ENCODE measurements at regions of chr3 and their contacts with region 1.

Region 1: DNA sequence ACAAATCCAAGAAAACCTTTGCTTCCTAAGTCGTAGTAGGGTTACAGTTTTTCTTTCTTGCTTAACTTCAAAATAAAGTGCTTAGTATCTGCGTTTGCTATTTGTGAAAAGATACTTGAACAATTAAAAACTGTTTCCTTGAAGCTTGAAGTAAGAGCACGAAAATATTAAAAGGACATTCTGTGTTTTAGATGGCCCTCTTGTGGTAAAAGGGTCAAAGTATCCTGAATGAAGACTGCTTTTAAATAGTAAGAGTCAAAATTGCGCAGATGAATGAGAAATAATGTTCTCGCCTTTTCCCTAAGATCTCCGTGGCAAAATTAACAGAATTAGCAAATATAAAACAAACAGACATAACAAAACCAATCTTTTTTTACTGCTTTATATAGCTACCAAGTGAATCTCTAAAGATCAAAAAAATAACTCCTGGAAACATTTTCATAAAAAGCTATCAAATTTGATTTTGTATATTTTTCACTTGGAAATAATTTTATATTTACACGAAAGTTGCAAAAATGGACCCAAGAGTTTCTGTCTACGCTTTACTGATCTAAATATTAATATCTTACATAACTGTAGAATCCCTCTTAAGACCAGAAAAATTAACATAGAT is 175.4 kb downstream of the MBNL1 start:
- DNase-seq: no peak
- H3K4me3 Mint-ChIP-seq: no peak overlapping the region
- H3K27ac Mint-ChIP-seq: no peak overlapping the region
- H3K4me1 Mint-ChIP-seq: peaks cover 65% of the 10 kb centered on the region
- H3K27me3 Mint-ChIP-seq: no peaks in the 10 kb centered on the region

Region 2: DNA sequence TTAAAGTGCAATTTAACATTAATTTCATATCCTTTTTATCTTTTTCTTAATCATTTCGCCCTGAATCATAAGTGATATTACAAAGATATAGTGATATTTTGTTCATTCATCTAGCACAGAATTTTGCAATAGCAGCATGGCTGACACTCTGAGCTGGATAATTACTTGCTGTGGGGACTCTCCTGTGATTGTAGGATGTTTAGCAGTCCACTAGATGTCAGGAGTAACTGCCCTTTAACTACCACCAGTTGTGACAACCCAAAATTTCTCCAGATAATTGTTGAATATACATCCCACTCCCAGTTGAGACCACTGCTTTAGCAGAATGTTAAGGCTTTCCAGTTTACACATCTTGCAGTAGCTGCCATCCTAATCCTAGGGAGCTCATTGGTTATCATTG is 372.2 kb before region 1 on chr3:
- intact Hi-C with region 1: loop called (anchors 1 kb)
- DNase-seq: no peak
- H3K4me3 Mint-ChIP-seq: no peak overlapping the region
- H3K27ac Mint-ChIP-seq: no peak overlapping the region
- H3K4me1 Mint-ChIP-seq: no peaks in the 10 kb centered on the region
- H3K27me3 Mint-ChIP-seq: peaks cover 2% of the 10 kb centered on the region

Region 3: GRCh38 chr3:152350139-152350538 is 94.0 kb before region 1 on chr3:
- intact Hi-C with region 1: no loop called
- DNase-seq: no peak
- H3K4me3 Mint-ChIP-seq: no peak overlapping the region
- H3K27ac Mint-ChIP-seq: no peak overlapping the region
- H3K4me1 Mint-ChIP-seq: peaks cover 24% of the 10 kb centered on the region
- H3K27me3 Mint-ChIP-seq: no peaks in the 10 kb centered on the region

Region 4: DNA sequence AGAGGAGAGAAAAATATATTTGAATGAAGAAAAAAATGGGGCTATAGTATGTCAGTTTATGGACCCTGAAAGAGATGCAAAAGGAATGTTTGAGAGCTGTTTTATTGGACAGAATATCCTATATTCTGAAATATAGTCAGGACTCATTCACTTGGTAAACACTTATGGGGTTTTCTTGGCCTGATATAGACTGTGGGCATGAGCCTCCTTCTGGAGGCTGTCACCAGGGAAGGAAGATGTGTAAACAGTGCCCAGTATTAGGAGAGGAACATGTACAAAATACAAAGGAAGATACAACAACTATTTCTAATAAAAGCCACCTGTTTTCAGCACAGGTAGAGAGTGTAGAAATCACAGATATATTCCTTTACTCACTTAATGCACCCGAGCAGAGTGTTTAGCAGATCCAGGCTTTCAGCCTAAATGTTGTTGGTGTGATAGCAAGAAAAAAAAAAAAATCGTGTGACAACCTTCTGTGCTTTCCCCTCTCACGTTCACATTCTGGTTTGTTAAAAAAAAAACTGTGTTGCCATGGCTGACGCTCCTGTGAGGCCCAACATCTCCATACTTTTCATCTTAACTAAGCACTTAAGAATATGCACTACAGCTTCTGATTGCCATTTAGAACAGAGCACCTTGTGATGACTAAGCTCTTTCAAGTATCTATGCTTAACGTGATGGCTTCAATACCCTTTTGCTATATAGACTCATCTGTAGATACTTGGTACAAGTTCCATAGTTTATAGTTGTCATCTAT is 41.3 kb before region 1 on chr3:
- intact Hi-C with region 1: loop called (anchors 5 kb)
- DNase-seq: no peak
- H3K4me3 Mint-ChIP-seq: no peak overlapping the region
- H3K27ac Mint-ChIP-seq: peak overlapping the region; percentile 86
- H3K4me1 Mint-ChIP-seq: peaks cover 79% of the 10 kb centered on the region
- H3K27me3 Mint-ChIP-seq: no peaks in the 10 kb centered on the region

Region 5: GRCh38 chr3:153144779-153145178 is 700.6 kb after region 1 on chr3:
- intact Hi-C with region 1: no loop called
- DNase-seq: no peak
- H3K4me3 Mint-ChIP-seq: no peak overlapping the region
- H3K27ac Mint-ChIP-seq: no peak overlapping the region
- H3K4me1 Mint-ChIP-seq: peaks cover 20% of the 10 kb centered on the region
- H3K27me3 Mint-ChIP-seq: no peaks in the 10 kb centered on the region